ENCODE measurements at regions of chr1 and their contacts with region 1.

Region 1: GRCh38 chr1:9942939-9943788 is at the starts of genes LZIC and NMNAT1:
- H3K4me3 ChIP-seq: peak within 1 kb of the TSS; percentile 89
- H3K27ac ChIP-seq: peak within 1 kb of the TSS; percentile 69
- H3K4me1 ChIP-seq: no peaks in the 10 kb centered on the region
- CTCF ChIP-seq: peak; percentile 13; the same call in 1 of the 2 replicates

Region 2: GRCh38 chr1:9807541-9807940 is 135.6 kb before region 1 on chr1:
- CTCF ChIA-PET with region 1: no interaction called
- POLR2A ChIA-PET with region 1: no interaction called
- H3K4me3 ChIP-seq: no peak overlapping the region
- H3K27ac ChIP-seq: no peak overlapping the region
- H3K4me1 ChIP-seq: peaks cover 28% of the 10 kb centered on the region
- CTCF ChIP-seq: no peak

Region 3: GRCh38 chr1:9929431-9930385 is 13.5 kb before region 1 on chr1:
- CTCF ChIA-PET with region 1: interaction called, 24 read pairs
- POLR2A ChIA-PET with region 1: interaction called, 4 read pairs
- H3K4me3 ChIP-seq: no peak overlapping the region
- H3K27ac ChIP-seq: no peak overlapping the region
- H3K4me1 ChIP-seq: no peaks in the 10 kb centered on the region
- CTCF ChIP-seq: no peak

Region 4: GRCh38 chr1:10032590-10033358 is 89.6 kb after region 1 on chr1 and contains the start of gene UBE4B:
- CTCF ChIA-PET with region 1: no interaction called
- POLR2A ChIA-PET with region 1: interaction called, 26 read pairs
- H3K4me3 ChIP-seq: peak within 1 kb of the TSS; percentile 99
- H3K27ac ChIP-seq: peak within 1 kb of the TSS; percentile 94
- H3K4me1 ChIP-seq: no peaks in the 10 kb centered on the region
- CTCF ChIP-seq: peak; percentile 93

Measured in HEK293 (cell line).